ENCODE measurements at regions of chr9 and their contacts with region 1.

Region 1: GRCh38 chr9:20622330-20623020 is at the start of gene MLLT3:
- DNase-seq: peak; percentile 96 to 98
- ATAC-seq: peak; percentile 93 to 99 (median 96)
- H3K4me3 ChIP-seq: peak within 1 kb of the TSS; percentile 66 to 94 (median 88)
- H3K27ac ChIP-seq: peak within 1 kb of the TSS; percentile 82 to 92 (median 85)
- H3K4me1 ChIP-seq: peaks cover 0 to 40% (median 33%) of the 10 kb centered on the region in 9 donors
- H3K27me3 ChIP-seq: peaks cover 0 to 7% (median 0%) of the 10 kb centered on the region in 7 donors
- CTCF ChIP-seq: peak in 5 of 9 donors; percentile 7 to 42 (median 35)
- total RNA-seq, gene MLLT3: 6.3 to 22.7 (median 14.7) TPM

Region 2: GRCh38 chr9:19471737-19472648 is 1150.5 kb before region 1 on chr9:
- intact Hi-C with region 1: loop called in 1 of 10 experiments (anchors 5 kb)
- DNase-seq: peak; percentile 54 to 57
- ATAC-seq: peak; percentile 49 to 82 (median 68)
- H3K4me3 ChIP-seq: peak overlapping the region in 6 of 10 donors; percentile 6 to 30 (median 26)
- H3K27ac ChIP-seq: peak overlapping the region in 3 of 10 donors; percentile 6 to 16 (median 12)
- H3K4me1 ChIP-seq: peaks cover 0 to 17% (median 11%) of the 10 kb centered on the region in 9 donors
- H3K27me3 ChIP-seq: no peaks in the 10 kb centered on the region
- CTCF ChIP-seq: peak; percentile 70 to 89 (median 74)

Region 3: GRCh38 chr9:20032413-20033006 is 590.0 kb before region 1 on chr9:
- intact Hi-C with region 1: loop called in 1 of 10 experiments (anchors 10 kb)
- DNase-seq: no peak
- ATAC-seq: peak in 5 of 8 donors; percentile 57 to 84 (median 71)
- H3K4me3 ChIP-seq: no peak overlapping the region
- H3K27ac ChIP-seq: peak overlapping the region in 9 of 10 donors; percentile 41 to 84 (median 64)
- H3K4me1 ChIP-seq: peaks cover 2 to 57% (median 18%) of the 10 kb centered on the region in 9 donors
- H3K27me3 ChIP-seq: no peaks in the 10 kb centered on the region
- CTCF ChIP-seq: no peak

Region 4: GRCh38 chr9:20307621-20308020 is 314.9 kb before region 1 on chr9:
- intact Hi-C with region 1: no loop called
- DNase-seq: no peak
- ATAC-seq: peak in 1 of 8 donors; percentile 54
- H3K4me3 ChIP-seq: no peak overlapping the region
- H3K27ac ChIP-seq: no peak overlapping the region
- H3K4me1 ChIP-seq: peaks cover 0 to 10% (median 0%) of the 10 kb centered on the region in 9 donors
- H3K27me3 ChIP-seq: peaks cover 0 to 3% (median 0%) of the 10 kb centered on the region in 7 donors
- CTCF ChIP-seq: no peak

Region 5: GRCh38 chr9:20426019-20426418 is 196.5 kb before region 1 on chr9:
- intact Hi-C with region 1: no loop called
- DNase-seq: no peak
- ATAC-seq: no peak
- H3K4me3 ChIP-seq: no peak overlapping the region
- H3K27ac ChIP-seq: no peak overlapping the region
- H3K4me1 ChIP-seq: no peaks in the 10 kb centered on the region
- H3K27me3 ChIP-seq: no peaks in the 10 kb centered on the region
- CTCF ChIP-seq: no peak

Region 6: GRCh38 chr9:20437476-20437875 is 185.0 kb before region 1 on chr9:
- intact Hi-C with region 1: no loop called
- DNase-seq: no peak
- ATAC-seq: peak in 5 of 8 donors; percentile 27 to 49 (median 44)
- H3K4me3 ChIP-seq: no peak overlapping the region
- H3K27ac ChIP-seq: no peak overlapping the region
- H3K4me1 ChIP-seq: peaks cover 0 to 26% (median 10%) of the 10 kb centered on the region in 9 donors
- H3K27me3 ChIP-seq: no peaks in the 10 kb centered on the region
- CTCF ChIP-seq: no peak

Region 7: GRCh38 chr9:20479419-20480155 is 142.9 kb before region 1 on chr9:
- intact Hi-C with region 1: loop called in 2 of 10 experiments (anchors 5 to 10 kb)
- DNase-seq: no peak
- ATAC-seq: no peak
- H3K4me3 ChIP-seq: no peak overlapping the region
- H3K27ac ChIP-seq: peak overlapping the region in 1 of 10 donors; percentile 19
- H3K4me1 ChIP-seq: peaks cover 0 to 40% (median 25%) of the 10 kb centered on the region in 9 donors
- H3K27me3 ChIP-seq: no peaks in the 10 kb centered on the region
- CTCF ChIP-seq: no peak

Region 8: GRCh38 chr9:20684035-20684872 is 61.8 kb after region 1 on chr9 and contains the start of gene FOCAD:
- intact Hi-C with region 1: loop called in 4 of 10 experiments (anchors 2 to 10 kb)
- DNase-seq: peak; percentile 94 to 97
- ATAC-seq: peak; percentile 98 to 100 (median 99)
- H3K4me3 ChIP-seq: peak within 1 kb of the TSS; percentile 77 to 99 (median 90)
- H3K27ac ChIP-seq: peak within 1 kb of the TSS; percentile 89 to 99 (median 96)
- H3K4me1 ChIP-seq: peaks cover 3 to 56% (median 28%) of the 10 kb centered on the region in 9 donors
- H3K27me3 ChIP-seq: no peaks in the 10 kb centered on the region
- CTCF ChIP-seq: peak in 2 of 9 donors; percentile 8 to 19
- total RNA-seq, gene FOCAD: 25.6 to 41.3 (median 33.3) TPM

Region 9: GRCh38 chr9:20701060-20701459 is 78.6 kb after region 1 on chr9:
- intact Hi-C with region 1: no loop called
- DNase-seq: no peak
- ATAC-seq: peak in 7 of 8 donors; percentile 35 to 85 (median 67)
- H3K4me3 ChIP-seq: no peak overlapping the region
- H3K27ac ChIP-seq: peak overlapping the region in 4 of 10 donors; percentile 13 to 52 (median 24)
- H3K4me1 ChIP-seq: peaks cover 5 to 32% (median 14%) of the 10 kb centered on the region in 9 donors
- H3K27me3 ChIP-seq: no peaks in the 10 kb centered on the region
- CTCF ChIP-seq: no peak

Region 10: GRCh38 chr9:20941174-20941690 is 318.8 kb after region 1 on chr9:
- intact Hi-C with region 1: loop called in 9 of 10 experiments (anchors 1 to 10 kb)
- DNase-seq: peak; percentile 13 to 51
- ATAC-seq: peak; percentile 84 to 93 (median 91)
- H3K4me3 ChIP-seq: no peak overlapping the region
- H3K27ac ChIP-seq: no peak overlapping the region
- H3K4me1 ChIP-seq: peaks cover 0 to 8% (median 0%) of the 10 kb centered on the region in 9 donors
- H3K27me3 ChIP-seq: no peaks in the 10 kb centered on the region
- CTCF ChIP-seq: peak; percentile 53 to 94 (median 89)

Measured in heart right ventricle (tissue), 16 donors.